ENCODE measurements at regions of chr20 and their contacts with region 1.

Region 1: DNA sequence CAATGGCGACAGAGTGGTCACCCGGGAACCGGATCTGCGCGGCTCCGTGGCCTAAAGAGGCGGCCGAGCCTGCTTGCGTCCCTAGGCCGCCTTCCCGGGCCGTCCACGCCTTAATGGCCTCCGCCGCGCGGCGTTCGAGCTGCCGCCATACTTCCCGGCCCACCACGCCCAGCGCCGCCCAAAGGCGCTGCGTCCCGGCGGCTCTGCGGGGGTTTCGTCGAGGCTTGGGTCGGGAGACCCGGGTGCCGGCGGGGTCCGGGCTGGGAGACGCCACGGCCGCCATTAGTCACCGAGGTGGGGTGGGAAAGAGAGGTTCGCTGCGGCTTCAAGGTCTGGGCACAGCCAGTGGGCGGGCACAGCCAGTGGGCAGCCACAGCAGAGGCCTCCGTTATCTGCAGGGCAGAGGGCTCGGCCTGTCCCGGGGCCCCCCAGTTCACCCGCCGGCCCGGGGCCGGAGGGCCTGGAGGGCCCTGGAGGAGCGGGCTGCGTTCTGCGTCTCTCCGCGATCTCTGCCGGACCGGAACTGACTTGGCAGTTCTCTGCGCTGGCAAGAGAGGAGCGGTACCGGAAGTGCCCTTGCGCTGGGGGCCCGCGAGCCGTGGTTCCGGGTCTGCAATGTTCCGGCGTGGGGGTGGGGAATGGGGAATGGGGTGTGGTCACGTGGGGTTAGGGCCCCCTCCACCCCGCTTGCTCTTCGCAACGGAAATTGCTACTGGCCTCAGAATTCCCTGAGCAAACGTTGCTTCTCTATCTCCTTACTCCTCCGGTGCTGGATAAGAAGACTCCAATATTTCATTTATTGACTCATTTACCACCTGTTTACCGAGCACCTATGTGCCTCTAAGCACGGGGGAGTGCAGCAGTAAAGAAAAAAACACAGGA is 82.3 kb downstream of the CNBD2 start:
- DNase-seq: peak; percentile 96
- H3K4me3 Mint-ChIP-seq: peak overlapping the region; percentile 94
- H3K27ac Mint-ChIP-seq: peak overlapping the region; percentile 88
- H3K4me1 Mint-ChIP-seq: peaks cover 25% of the 10 kb centered on the region
- H3K27me3 Mint-ChIP-seq: peaks cover 11% of the 10 kb centered on the region

Region 2: GRCh38 chr20:35771689-35772562 is 278.8 kb before region 1 on chr20 and contains the start of gene PHF20:
- intact Hi-C with region 1: loop called (anchors 10 kb)
- DNase-seq: peak; percentile 99
- H3K4me3 Mint-ChIP-seq: peak within 1 kb of the TSS; percentile 81
- H3K27ac Mint-ChIP-seq: peak within 1 kb of the TSS; percentile 93
- H3K4me1 Mint-ChIP-seq: peaks cover 51% of the 10 kb centered on the region
- H3K27me3 Mint-ChIP-seq: no peaks in the 10 kb centered on the region
- total RNA-seq, gene PHF20: 53.8 and 62.9 TPM in 2 replicates

Region 3: GRCh38 chr20:35942243-35942642 is 108.4 kb before region 1 on chr20:
- intact Hi-C with region 1: no loop called
- DNase-seq: no peak
- H3K4me3 Mint-ChIP-seq: no peak overlapping the region
- H3K27ac Mint-ChIP-seq: no peak overlapping the region
- H3K4me1 Mint-ChIP-seq: peaks cover 2% of the 10 kb centered on the region
- H3K27me3 Mint-ChIP-seq: no peaks in the 10 kb centered on the region

Region 4: DNA sequence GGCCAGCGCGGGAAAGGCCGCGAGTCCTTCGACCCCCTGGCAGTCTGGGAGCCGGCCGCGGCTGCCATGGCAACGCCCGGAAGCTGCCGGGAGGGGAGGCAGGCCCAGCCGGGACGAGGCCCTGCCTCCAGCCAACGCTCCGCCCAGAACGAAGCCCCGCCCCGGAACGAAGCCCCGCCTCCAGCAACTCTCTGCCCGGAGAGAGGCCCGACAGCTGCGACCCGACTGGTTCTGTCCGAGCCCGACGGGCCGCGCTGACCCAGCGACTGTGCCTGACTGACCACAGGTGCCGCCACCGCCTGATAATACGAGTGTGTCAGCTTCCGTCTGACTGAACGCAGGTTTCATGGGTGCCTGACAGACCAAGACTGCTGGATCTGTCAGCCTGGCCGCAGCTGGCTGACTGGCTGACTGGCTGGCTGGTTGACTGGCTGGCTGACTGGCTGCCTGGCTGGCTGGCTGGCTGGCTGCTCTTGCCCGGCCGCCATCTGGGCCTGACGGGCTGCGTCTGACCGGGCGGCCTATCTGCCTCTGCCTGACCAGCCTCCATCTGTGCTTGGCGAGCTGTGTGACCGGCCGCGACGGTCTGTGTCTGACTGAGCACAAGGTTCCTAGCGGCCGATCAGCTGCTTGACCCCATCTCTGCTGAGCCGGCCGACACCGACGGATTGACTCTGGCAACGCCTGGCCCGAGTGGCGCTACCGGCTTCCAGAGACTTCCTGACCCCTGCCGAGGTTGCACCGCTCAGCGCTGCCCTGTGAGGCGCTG is 14.2 kb after region 1 on chr20:
- intact Hi-C with region 1: loop called (anchors 2 kb)
- DNase-seq: peak; percentile 97
- H3K4me3 Mint-ChIP-seq: peak overlapping the region; percentile 85
- H3K27ac Mint-ChIP-seq: no peak overlapping the region
- H3K4me1 Mint-ChIP-seq: peaks cover 6% of the 10 kb centered on the region
- H3K27me3 Mint-ChIP-seq: peaks cover 30% of the 10 kb centered on the region

Region 5: GRCh38 chr20:36093025-36093803 is 42.5 kb after region 1 on chr20:
- intact Hi-C with region 1: loop called (anchors 5 kb)
- DNase-seq: peak; percentile 72
- H3K4me3 Mint-ChIP-seq: peak overlapping the region; percentile 86
- H3K27ac Mint-ChIP-seq: no peak overlapping the region
- H3K4me1 Mint-ChIP-seq: peaks cover 15% of the 10 kb centered on the region
- H3K27me3 Mint-ChIP-seq: peaks cover 48% of the 10 kb centered on the region

Region 6: GRCh38 chr20:36167826-36168531 is 117.3 kb after region 1 on chr20:
- intact Hi-C with region 1: no loop called
- DNase-seq: no peak
- H3K4me3 Mint-ChIP-seq: no peak overlapping the region
- H3K27ac Mint-ChIP-seq: no peak overlapping the region
- H3K4me1 Mint-ChIP-seq: no peaks in the 10 kb centered on the region
- H3K27me3 Mint-ChIP-seq: peaks cover 5% of the 10 kb centered on the region

Region 7: GRCh38 chr20:36235892-36236785 is 185.5 kb after region 1 on chr20 and contains the start of gene AAR2:
- intact Hi-C with region 1: loop called (anchors 1 kb)
- DNase-seq: peak; percentile 94
- H3K4me3 Mint-ChIP-seq: peak within 1 kb of the TSS; percentile 85
- H3K27ac Mint-ChIP-seq: peak within 1 kb of the TSS; percentile 91
- H3K4me1 Mint-ChIP-seq: peaks cover 19% of the 10 kb centered on the region
- H3K27me3 Mint-ChIP-seq: peaks cover 1% of the 10 kb centered on the region
- total RNA-seq, gene AAR2: 30.7 and 32.6 TPM in 2 replicates